Heart left ventricle (tissue), 16 donors: ENCODE measurements at regions of chr1 and their contacts with region 1.

Region 1: DNA sequence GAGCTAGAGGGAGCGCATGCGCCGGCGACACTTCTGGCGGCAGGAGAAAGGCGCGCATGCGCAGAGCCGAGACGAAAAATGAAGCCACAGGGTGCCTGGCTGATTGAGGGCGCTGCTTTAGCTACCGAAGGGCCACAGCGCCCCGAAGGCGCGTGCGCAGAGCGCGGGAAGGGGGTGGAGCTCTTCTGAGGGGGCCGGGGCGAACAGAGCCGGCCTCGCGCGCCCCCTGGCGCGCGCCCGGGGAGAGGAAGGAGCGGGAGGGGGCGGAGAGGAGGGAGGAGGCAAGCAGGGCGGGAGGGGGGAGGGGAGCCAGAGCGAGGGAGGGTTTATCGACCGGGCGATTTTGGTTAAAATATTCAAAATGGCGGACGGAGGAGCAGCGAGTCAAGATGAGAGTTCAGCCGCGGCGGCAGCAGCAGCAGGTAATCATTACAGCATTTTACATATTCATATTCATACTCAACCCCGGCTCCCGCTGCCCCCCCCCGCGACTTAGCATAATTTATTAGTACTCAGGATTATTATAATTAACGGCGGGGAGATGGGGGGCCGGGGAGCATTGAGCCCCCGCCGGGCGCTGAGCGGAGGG is at the start of gene POU2F1:
- DNase-seq: peak; percentile 98 to 100 (median 99)
- ATAC-seq: peak; percentile 94 to 97 (median 95)
- H3K4me3 ChIP-seq: peak within 1 kb of the TSS; percentile 70 to 93 (median 86)
- H3K27ac ChIP-seq: peak within 1 kb of the TSS; percentile 90 to 97 (median 94)
- H3K4me1 ChIP-seq: peaks cover 0 to 34% (median 18%) of the 10 kb centered on the region in 12 donors
- H3K27me3 ChIP-seq: no peaks in the 10 kb centered on the region
- CTCF ChIP-seq: peak; percentile 51 to 87 (median 60)
- POLR2A ChIP-seq: peak; percentile 41 to 71
- total RNA-seq, gene POU2F1: 6.6 to 13.4 (median 9.7) TPM

Region 2: GRCh38 chr1:166838766-166839599 is 381.6 kb before region 1 on chr1 and contains the start of gene POGK:
- intact Hi-C with region 1: loop called in 1 of 10 experiments (anchors 10 kb)
- DNase-seq: peak; percentile 94 to 96 (median 96)
- ATAC-seq: peak; percentile 83 to 97 (median 96)
- H3K4me3 ChIP-seq: peak within 1 kb of the TSS; percentile 59 to 89 (median 79)
- H3K27ac ChIP-seq: peak within 1 kb of the TSS; percentile 81 to 96 (median 92)
- H3K4me1 ChIP-seq: peaks cover 4 to 53% (median 48%) of the 10 kb centered on the region in 12 donors
- H3K27me3 ChIP-seq: no peaks in the 10 kb centered on the region
- CTCF ChIP-seq: peak in 3 of 12 donors; percentile 8 to 12 (median 11)
- POLR2A ChIP-seq: peak in 1 of 2 donors; percentile 81
- total RNA-seq, gene POGK: 12.1 to 20.8 (median 16.6) TPM

Region 3: DNA sequence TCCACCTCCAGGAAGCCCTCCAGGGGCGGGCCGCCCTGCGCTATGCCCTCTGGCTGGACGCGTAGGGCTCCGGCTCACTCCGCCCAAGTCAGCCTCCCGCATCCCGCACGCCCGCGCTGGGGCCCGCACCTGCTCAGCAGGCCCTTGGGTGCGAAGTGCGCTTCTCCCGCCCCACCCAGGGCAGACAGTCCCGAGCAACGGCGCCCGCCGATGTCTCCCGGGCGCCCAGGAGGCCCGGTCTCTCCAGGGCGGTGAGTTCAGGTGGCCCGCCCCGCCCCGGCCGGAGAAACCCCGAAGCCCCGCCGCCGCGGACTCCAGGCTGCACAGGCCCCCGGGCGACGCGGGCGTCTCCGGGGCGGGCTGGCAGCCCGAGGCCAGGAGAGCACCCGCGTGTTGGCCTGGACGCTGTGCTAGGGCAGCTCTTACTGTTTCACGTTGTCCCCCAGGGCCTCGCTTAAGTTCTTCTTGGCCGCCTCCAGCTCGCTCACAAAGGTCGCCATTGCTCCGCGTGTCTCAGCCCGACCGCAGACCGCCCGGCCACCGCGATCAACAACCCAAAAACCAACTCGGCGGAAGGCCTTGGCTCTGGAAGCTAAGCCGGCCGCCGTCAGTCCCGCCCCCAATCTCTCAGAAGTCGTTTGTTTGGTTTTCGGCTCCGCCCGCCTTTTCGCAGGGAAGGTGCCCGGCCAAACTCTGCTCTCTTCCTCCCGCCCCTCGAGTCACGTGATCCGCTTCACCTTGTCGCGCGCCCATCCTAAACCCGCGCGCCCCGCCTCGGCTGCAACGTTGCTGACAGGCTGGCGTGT is 344.7 kb before region 1 on chr1 and contains the start of gene TADA1:
- intact Hi-C with region 1: loop called in 2 of 10 experiments (anchors 5 to 10 kb)
- DNase-seq: peak; percentile 98 to 99 (median 99)
- ATAC-seq: peak; percentile 96 to 98 (median 97)
- H3K4me3 ChIP-seq: peak within 1 kb of the TSS; percentile 75 to 100 (median 86)
- H3K27ac ChIP-seq: peak within 1 kb of the TSS; percentile 82 to 96 (median 90)
- H3K4me1 ChIP-seq: peaks cover 0 to 36% (median 18%) of the 10 kb centered on the region in 12 donors
- H3K27me3 ChIP-seq: no peaks in the 10 kb centered on the region
- CTCF ChIP-seq: peak in 5 of 12 donors; percentile 26 to 47 (median 42)
- POLR2A ChIP-seq: peak in 1 of 2 donors; percentile 85
- total RNA-seq, gene TADA1: 7.2 to 10.8 (median 9.3) TPM

Region 4: DNA sequence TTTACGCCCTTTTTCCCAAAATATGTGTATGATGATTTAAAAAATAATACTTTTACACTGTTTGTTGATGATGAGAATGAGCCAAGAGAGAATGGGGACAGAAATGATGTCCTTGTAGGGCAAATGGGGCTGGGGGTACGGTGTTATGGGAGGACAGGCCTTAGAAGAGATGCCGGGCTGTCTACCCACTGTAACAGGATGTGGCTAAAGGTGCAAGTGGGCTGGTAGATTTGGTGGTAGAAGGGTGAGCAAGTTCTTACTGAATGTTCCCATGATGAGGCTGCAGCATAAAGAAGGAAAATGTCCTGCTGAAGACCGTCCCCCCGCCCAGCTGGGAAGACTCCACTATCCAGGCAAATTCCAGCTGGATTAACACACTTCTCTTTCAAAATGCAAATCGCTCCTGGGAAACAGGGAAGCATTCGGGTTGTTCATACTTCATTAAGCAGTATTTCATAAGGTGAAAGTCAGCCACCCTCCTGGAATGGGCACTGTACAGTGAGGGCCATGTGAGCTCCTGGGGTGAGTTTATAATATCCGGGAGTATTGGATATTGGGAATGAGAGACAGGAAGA is 144.4 kb before region 1 on chr1:
- intact Hi-C with region 1: loop called in 2 of 10 experiments (anchors 10 kb)
- DNase-seq: no peak
- ATAC-seq: no peak
- H3K4me3 ChIP-seq: no peak overlapping the region
- H3K27ac ChIP-seq: no peak overlapping the region
- H3K4me1 ChIP-seq: peaks cover 0 to 11% (median 0%) of the 10 kb centered on the region in 12 donors
- H3K27me3 ChIP-seq: no peaks in the 10 kb centered on the region
- CTCF ChIP-seq: no peak
- POLR2A ChIP-seq: no peak

Region 5: DNA sequence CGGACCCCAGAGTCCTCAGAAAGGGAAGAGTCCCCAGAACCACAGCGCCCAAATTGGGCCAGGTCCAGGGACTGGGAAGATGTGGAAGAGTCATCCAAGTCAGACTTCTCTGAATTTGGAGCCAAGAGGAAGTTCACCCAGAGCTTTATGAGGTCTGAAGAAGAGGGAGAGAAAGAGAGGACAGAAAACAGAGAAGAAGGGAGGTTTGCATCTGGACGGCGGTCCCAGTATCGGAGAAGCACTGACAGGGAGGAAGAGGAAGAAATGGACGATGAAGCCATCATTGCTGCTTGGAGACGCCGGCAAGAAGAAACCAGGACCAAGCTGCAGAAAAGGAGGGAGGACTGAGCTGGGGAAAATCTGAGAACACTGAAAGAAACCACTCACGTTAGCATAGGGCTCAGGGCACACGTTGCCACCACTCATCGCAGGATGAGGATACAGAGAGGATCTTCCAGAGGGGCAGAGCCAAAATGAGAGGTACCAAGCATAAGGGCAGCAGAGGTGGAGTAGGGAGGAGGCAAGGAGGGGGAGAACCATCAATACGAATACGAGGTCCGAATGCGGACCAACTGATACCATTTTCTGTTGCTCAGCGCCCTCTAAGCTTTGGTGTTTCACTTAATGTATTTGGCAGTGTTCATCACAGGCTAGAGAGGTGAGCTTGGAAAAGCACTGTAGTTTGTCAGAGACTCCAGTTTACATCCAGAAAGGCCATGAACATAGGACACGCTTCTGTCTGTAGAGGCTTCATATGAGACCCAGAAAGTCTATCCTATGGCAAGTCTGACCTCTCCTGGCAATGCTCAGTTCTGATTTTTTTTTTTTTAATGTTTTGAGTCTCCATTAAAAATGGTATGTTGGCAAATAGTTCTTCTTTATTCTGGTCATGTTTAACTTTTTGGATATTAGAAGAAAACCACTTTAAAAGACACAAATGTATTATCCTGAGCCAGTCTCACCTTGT is 92.1 kb before region 1 on chr1:
- intact Hi-C with region 1: loop called in 1 of 10 experiments (anchors 5 kb)
- DNase-seq: no peak
- ATAC-seq: no peak
- H3K4me3 ChIP-seq: no peak overlapping the region
- H3K27ac ChIP-seq: no peak overlapping the region
- H3K4me1 ChIP-seq: peaks cover 0 to 11% (median 0%) of the 10 kb centered on the region in 12 donors
- H3K27me3 ChIP-seq: peaks cover 0 to 7% (median 0%) of the 10 kb centered on the region in 9 donors
- CTCF ChIP-seq: no peak
- POLR2A ChIP-seq: no peak

Region 6: GRCh38 chr1:167273027-167273800 is 52.6 kb after region 1 on chr1:
- intact Hi-C with region 1: loop called in 1 of 10 experiments (anchors 10 kb)
- DNase-seq: no peak
- ATAC-seq: peak; percentile 37 to 69 (median 64)
- H3K4me3 ChIP-seq: no peak overlapping the region
- H3K27ac ChIP-seq: no peak overlapping the region
- H3K4me1 ChIP-seq: peaks cover 0 to 40% (median 20%) of the 10 kb centered on the region in 12 donors
- H3K27me3 ChIP-seq: no peaks in the 10 kb centered on the region
- CTCF ChIP-seq: no peak
- POLR2A ChIP-seq: no peak